RWPE1 (cell line): ENCODE measurements at regions of chr1 and their contacts with region 1.

Region 1: DNA sequence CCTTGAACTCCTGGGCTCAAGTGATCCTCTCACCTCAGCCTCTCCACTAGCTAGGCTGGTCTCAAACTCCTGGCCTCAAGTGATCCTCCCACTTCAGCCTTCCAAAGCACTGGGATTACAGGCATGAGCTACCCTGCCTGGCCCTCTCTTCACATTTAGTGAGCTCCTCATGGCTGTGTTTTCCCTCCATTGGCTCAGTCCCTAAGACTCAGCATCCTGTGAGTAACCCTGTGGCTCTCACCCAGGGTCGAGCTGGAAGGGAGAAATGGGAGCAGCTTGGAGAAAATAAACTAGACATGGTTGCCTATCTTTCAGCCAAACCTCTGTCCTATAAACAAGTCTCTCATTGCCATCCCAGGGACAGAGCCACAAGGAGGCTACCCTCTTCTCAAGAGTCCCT is 17.5 kb downstream of the NCF2 start:
- DNase-seq: no peak
- H3K27ac ChIP-seq: no peak overlapping the region
- CTCF ChIP-seq: no peak

Region 2: DNA sequence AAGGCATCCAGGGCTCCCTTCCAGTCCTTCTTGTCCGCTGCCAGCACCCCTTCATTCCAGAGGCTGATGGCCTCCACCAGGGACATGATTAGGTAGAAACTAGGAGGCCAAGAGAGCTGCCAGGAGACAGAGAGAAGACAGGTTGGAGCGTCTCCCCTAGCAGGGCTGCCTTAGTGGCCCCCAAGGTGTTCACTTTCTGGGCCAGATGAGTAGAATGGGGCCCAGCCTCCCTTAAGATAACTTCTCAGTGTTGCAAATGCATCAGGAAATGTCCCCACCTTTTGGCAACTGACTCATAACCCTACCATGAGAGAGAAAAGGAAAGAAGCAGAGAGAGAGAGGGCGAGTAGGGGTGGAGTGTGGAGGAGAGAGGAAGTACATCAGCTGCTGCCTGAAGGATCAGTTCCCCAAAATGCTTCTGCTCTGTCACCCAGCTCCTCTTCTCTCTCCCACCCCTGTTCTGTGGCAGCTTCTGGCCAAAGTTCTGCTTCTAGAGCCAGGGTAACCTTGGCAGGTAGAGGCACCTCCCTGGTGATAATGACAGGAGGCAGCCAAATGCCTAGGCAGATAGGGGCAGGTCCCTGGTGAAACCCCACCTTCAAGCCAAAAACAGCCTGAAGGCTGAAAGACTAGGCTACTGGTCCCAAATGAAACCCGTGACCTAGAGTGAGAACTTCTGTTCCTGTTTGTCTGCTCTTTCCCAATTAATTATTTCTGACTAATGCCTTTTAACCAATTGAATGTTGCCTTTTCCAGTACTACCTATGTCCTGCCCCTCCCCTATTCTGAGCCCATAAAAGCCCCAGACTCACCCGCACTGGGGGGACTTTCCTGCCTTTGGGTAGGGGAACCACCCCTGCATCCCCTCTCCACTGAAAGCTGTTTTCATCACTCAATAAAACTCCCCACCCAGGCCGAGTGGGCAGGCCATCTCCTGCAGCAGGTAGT is 17.8 kb after region 1 on chr1 and contains the start of gene NCF2:
- CTCF ChIA-PET with region 1: no interaction called
- POLR2A ChIA-PET with region 1: interaction called, 13 read pairs
- DNase-seq: peak; percentile 26
- H3K27ac ChIP-seq: no peak within 1 kb of the TSS
- CTCF ChIP-seq: no peak